ENCODE measurements at regions of chr3 and their contacts with region 1.

Region 1: DNA sequence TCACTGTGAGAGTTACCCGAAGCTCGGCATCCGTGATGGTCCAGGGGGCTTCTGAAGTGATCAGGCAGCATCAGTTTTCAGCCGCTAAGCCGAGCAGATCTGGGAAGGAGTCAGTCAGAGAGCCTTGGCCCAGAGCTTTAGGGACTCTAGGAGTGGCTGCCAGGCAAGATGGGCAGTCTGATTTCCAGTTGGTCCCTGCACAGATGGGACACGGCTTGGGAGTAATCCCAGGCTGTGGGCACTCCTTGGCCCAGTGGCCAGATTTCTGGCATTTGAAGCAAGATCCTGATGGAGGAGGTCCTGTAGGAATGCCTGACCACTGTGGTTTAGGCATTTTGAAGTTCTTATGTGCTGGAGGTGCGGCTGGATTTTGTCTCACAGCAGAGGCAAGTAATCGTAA is 10.5 kb upstream of the IP6K2 start:
- DNase-seq: no peak
- H3K4me3 ChIP-seq: no peak overlapping the region
- H3K27ac ChIP-seq: no peak overlapping the region
- H3K4me1 ChIP-seq: no peaks in the 10 kb centered on the region
- H3K27me3 ChIP-seq: no peaks in the 10 kb centered on the region
- CTCF ChIP-seq: no peak

Region 2: DNA sequence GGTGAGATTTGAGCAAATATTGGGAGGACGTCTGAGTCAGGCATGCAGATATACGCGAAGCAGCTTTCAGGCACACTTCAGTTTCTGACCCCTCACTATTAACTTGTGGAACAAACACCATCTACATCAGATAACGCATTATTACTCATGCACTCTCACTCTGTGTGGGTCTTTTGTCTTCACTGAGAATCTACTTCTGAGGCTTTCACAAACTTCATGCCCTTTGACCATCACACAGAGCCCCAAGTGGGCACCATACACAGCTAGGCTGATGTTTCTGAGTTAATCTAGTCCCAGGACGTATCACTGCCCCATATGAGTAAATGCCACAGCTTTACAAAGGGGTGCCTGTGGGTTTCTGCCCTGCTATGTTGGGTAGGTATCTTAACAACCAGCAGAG is 29.1 kb after region 1 on chr3:
- CTCF ChIA-PET with region 1: interaction called, 33 read pairs
- dilution Hi-C with region 1: loop called (anchors 5 kb)
- in situ Hi-C with region 1: no loop called
- intact Hi-C with region 1: no loop called
- DNase-seq: no peak
- H3K4me3 ChIP-seq: no peak overlapping the region
- H3K27ac ChIP-seq: no peak overlapping the region
- H3K4me1 ChIP-seq: peaks cover 5% of the 10 kb centered on the region
- H3K27me3 ChIP-seq: no peaks in the 10 kb centered on the region
- CTCF ChIP-seq: no peak

Measured in mammary epithelial cell (primary cell).